Body of pancreas (tissue), 4 donors: ENCODE measurements at regions of chr6 and their contacts with region 1.

Region 1: GRCh38 chr6:33579828-33580714 is at the start of gene BAK1:
- DNase-seq: peak; percentile 82 to 93 (median 92)
- ATAC-seq: peak; percentile 93
- H3K4me3 ChIP-seq: peak within 1 kb of the TSS; percentile 54 to 90
- H3K27ac ChIP-seq: peak within 1 kb of the TSS; percentile 62 to 83 (median 81)
- H3K4me1 ChIP-seq: peaks cover 32% of the 10 kb centered on the region
- H3K27me3 ChIP-seq: no peaks in the 10 kb centered on the region
- CTCF ChIP-seq: peak; percentile 23 to 66 (median 52)
- POLR2A ChIP-seq: peak; percentile 52 to 84 (median 80)
- total RNA-seq, gene BAK1: 2.3 to 5.7 TPM

Region 2: GRCh38 chr6:33288921-33289748 is 290.9 kb before region 1 on chr6 and contains the starts of genes PFDN6 and WDR46:
- intact Hi-C with region 1: no loop called
- DNase-seq: peak; percentile 78 to 86 (median 81)
- ATAC-seq: peak; percentile 96
- H3K4me3 ChIP-seq: peak within 1 kb of the TSS; percentile 35 to 36
- H3K27ac ChIP-seq: peak within 1 kb of the TSS in 3 of 4 donors; percentile 55 to 80 (median 65)
- H3K4me1 ChIP-seq: peaks cover 25% of the 10 kb centered on the region
- H3K27me3 ChIP-seq: no peaks in the 10 kb centered on the region
- CTCF ChIP-seq: no peak
- POLR2A ChIP-seq: peak in 1 of 3 donors; percentile 30
- total RNA-seq, gene PFDN6: 10.2 to 19.7 TPM
- total RNA-seq, gene WDR46: 27.8 to 43.2 TPM

Region 3: GRCh38 chr6:33696548-33697518 is 116.8 kb after region 1 on chr6:
- intact Hi-C with region 1: loop called (anchors 5 kb)
- DNase-seq: peak in 3 of 4 donors; percentile 38 to 45 (median 45)
- ATAC-seq: peak; percentile 38
- H3K4me3 ChIP-seq: no peak overlapping the region
- H3K27ac ChIP-seq: peak overlapping the region in 2 of 4 donors; percentile 26 to 42
- H3K4me1 ChIP-seq: peaks cover 8% of the 10 kb centered on the region
- H3K27me3 ChIP-seq: no peaks in the 10 kb centered on the region
- CTCF ChIP-seq: no peak
- POLR2A ChIP-seq: no peak

Region 4: GRCh38 chr6:33860706-33861474 is 280.8 kb after region 1 on chr6:
- intact Hi-C with region 1: no loop called
- DNase-seq: peak in 1 of 4 donors; percentile 15
- ATAC-seq: no peak
- H3K4me3 ChIP-seq: no peak overlapping the region
- H3K27ac ChIP-seq: no peak overlapping the region
- H3K4me1 ChIP-seq: peaks cover 14% of the 10 kb centered on the region
- H3K27me3 ChIP-seq: no peaks in the 10 kb centered on the region
- CTCF ChIP-seq: no peak
- POLR2A ChIP-seq: no peak